ENCODE measurements at regions of chr4 and their contacts with region 1.

Region 1: DNA sequence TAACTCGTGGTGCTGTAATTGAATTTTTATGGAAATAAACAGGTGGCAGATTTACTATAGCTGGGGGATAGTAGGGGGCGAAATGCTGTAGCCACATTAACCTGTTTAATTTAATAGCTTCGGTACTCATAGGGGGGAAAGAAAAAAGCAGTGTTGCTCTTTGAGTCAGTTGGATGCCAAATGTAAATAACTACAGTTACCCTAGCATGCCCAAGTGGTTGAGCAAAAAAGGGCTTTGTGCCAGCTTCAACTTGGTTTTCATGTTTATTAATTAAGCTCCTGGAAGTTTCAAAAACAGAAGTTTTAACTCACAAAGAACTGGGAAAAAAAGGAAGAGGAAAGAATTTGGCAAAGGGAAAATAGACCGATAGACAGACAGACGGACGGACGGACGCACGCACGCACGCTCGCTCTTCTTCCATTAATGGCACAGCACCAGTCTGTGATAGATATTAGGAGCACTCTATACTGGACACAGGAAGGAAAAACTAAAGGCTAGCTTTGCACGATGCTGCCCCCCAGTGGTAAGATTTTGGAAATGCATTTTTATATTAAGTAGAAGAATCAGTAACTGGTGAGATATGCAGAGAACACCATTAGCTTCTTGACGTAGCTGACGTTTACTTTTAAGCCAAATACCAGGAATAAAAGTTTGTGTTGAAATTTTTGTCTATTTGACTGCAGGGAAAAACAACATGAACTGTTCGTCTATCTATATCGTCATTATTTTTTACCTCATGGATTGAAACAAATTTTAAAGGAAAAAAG is 151.8 kb downstream of the SLC7A11 start:
- DNase-seq: peak; percentile 74

Region 2: GRCh38 chr4:137819964-137820383 is 270.4 kb before region 1 on chr4:
- CTCF ChIA-PET with region 1: interaction called, 13 read pairs
- POLR2A ChIA-PET with region 1: no interaction called
- DNase-seq: peak; percentile 53

Region 3: GRCh38 chr4:138035781-138036258 is 54.5 kb before region 1 on chr4:
- CTCF ChIA-PET with region 1: interaction called, 34 read pairs
- POLR2A ChIA-PET with region 1: interaction called, 3 read pairs
- DNase-seq: peak; percentile 65